Sigmoid colon (tissue), 7 donors: ENCODE measurements at regions of chr2 and their contacts with region 1.

Region 1: DNA sequence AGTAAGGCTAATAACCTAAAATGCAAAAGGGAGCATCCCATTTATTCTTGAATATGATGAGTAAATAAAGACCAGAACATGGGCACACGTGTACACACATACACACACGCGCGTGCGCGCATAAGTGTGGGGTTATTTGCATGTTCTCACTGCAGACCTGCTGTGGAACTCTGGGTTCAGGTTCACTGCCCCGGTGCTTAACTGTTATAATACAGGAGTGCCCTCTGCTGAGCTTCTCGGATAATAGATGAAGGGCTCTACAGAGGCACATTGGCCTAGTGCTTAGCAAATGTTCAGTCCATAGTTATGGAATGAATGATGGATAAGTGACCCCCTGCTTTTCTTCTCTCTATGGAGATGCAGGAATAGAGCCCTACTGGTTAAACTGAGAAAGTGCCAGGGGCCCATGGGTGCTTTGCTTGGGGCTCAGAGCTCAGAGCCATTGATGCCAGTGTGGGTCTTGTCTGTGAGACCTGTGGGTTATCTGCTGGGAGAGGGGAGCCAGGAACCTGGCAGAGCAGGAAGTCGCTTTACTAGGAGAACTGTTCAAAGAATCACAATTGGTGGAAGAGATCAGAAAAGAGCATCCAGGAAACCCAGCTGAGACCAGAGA is 3.6 kb upstream of the ARL4C start:
- DNase-seq: no peak
- H3K4me3 ChIP-seq: no peak overlapping the region
- H3K27ac ChIP-seq: no peak overlapping the region
- H3K4me1 ChIP-seq: peaks cover 0 to 14% (median 11%) of the 10 kb centered on the region in 4 donors
- H3K27me3 ChIP-seq: peaks cover 0 to 2% (median 0%) of the 10 kb centered on the region in 3 donors
- CTCF ChIP-seq: peak in 3 of 4 experiments; percentile 27 to 38 (median 30)
- EP300 ChIP-seq: no peak
- POLR2A ChIP-seq: no peak

Region 2: DNA sequence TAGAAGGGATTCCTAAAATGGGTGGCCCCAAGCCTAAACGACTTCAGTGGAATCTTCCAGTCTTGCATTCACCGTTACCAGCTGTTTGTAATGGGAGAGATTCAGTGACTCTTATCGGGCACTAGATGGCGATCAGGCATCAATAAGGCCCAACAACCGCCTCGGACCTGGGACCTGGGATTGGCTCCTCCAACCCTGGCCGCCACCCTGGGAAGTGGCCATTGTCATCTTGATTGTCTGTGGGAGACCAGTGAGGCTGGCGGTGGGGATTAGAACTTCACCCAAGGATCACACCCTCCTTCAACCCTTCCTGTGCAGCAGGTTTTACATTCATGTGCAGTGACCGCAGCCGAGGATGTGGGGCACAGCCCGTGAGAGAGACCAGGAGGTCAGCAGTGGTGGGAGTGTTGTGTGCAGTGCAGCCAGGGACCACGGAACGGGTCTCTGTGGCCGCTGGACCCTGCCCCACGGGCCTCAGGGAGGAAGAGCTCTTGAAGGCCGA is 364.7 kb before region 1 on chr2:
- intact Hi-C with region 1: loop called (anchors 2 kb)
- DNase-seq: peak; percentile 65
- H3K4me3 ChIP-seq: no peak overlapping the region
- H3K27ac ChIP-seq: no peak overlapping the region
- H3K4me1 ChIP-seq: no peaks in the 10 kb centered on the region
- H3K27me3 ChIP-seq: peaks cover 0 to 11% (median 0%) of the 10 kb centered on the region in 3 donors
- CTCF ChIP-seq: peak; percentile 22 to 67 (median 46)
- EP300 ChIP-seq: no peak
- POLR2A ChIP-seq: no peak

Region 3: GRCh38 chr2:234288974-234289455 is 211.5 kb before region 1 on chr2:
- intact Hi-C with region 1: loop called (anchors 2 kb)
- DNase-seq: peak; percentile 80
- H3K4me3 ChIP-seq: no peak overlapping the region
- H3K27ac ChIP-seq: no peak overlapping the region
- H3K4me1 ChIP-seq: no peaks in the 10 kb centered on the region
- H3K27me3 ChIP-seq: no peaks in the 10 kb centered on the region
- CTCF ChIP-seq: peak; percentile 50 to 68 (median 62)
- EP300 ChIP-seq: no peak
- POLR2A ChIP-seq: no peak

Region 4: GRCh38 chr2:234368861-234369261 is 131.6 kb before region 1 on chr2:
- intact Hi-C with region 1: loop called (anchors 1 kb)
- DNase-seq: peak; percentile 92
- H3K4me3 ChIP-seq: no peak overlapping the region
- H3K27ac ChIP-seq: peak overlapping the region in 3 of 4 donors; percentile 55 to 80 (median 71)
- H3K4me1 ChIP-seq: peaks cover 0 to 42% (median 28%) of the 10 kb centered on the region in 4 donors
- H3K27me3 ChIP-seq: no peaks in the 10 kb centered on the region
- CTCF ChIP-seq: no peak
- EP300 ChIP-seq: peak; percentile 82 to 96 (median 88)
- POLR2A ChIP-seq: no peak